IMR-90 (cell line): ENCODE measurements at regions of chr17 and their contacts with region 1.

Region 1: GRCh38 chr17:2172077-2172851 is 117.4 kb downstream of the HIC1 start:
- DNase-seq: peak; percentile 99
- ATAC-seq: peak; percentile 60
- H3K4me3 ChIP-seq: peak overlapping the region; percentile 15; the same call in 1 of the 2 replicates
- H3K27ac ChIP-seq: peak overlapping the region; percentile 99
- H3K4me1 ChIP-seq: peaks cover 50% of the 10 kb centered on the region
- H3K27me3 ChIP-seq: no peaks in the 10 kb centered on the region
- CTCF ChIP-seq: no peak
- POLR2A ChIP-seq: no peak; the same call in 1 of the 2 replicates
- RAD21 ChIP-seq: peak; percentile 40

Region 2: DNA sequence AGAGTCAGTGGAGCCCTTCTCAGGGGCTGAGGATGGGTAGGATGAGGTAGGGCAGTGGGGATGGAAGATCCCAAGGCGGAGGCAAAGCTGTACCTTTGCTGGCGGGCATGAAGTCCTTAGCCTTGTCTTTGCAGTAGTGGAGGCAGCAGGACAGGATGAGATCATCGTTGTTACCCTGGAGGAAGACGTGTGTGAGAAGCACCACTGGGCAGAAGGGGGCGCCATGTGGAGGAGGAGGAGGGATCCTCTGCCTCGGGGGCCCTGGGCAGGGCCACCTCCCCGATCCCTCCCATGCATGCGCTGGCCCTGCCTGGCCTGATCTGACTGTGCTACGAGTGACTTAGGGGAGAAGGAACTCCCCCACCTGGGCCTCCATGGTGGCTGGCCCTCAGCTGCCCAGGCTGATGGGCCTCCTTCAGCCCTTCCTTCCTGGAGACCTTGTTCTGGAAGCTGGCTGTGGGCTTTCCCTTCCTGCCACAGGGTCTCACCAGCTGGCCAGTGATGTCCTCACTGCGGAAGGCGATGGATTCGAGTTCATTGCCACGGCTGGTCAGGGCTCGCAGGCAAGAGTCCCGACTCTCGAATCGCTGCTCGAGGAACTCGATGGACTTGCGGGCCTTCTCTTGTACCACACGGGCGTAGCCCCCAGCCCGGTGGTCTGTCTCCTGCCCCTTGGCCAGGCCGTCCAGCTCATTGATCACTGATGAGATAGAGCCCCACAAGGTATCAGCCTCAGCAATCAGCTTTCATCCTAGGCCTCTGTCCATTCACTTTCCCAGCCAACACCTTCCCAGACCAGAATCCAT is 107.1 kb before region 1 on chr17:
- CTCF ChIA-PET with region 1: no interaction called
- POLR2A ChIA-PET with region 1: no interaction called
- dilution Hi-C with region 1: no loop called
- in situ Hi-C with region 1: loop called (anchors 10 kb)
- intact Hi-C with region 1: loop called (anchors 2 kb)
- DNase-seq: peak; percentile 68
- ATAC-seq: no peak
- H3K4me3 ChIP-seq: no peak overlapping the region
- H3K27ac ChIP-seq: peak overlapping the region; percentile 92
- H3K4me1 ChIP-seq: peaks cover 74% of the 10 kb centered on the region
- H3K27me3 ChIP-seq: no peaks in the 10 kb centered on the region
- CTCF ChIP-seq: peak; percentile 60
- POLR2A ChIP-seq: no peak
- RAD21 ChIP-seq: peak; percentile 53

Region 3: GRCh38 chr17:2348308-2348685 is 176.0 kb after region 1 on chr17:
- CTCF ChIA-PET with region 1: no interaction called
- POLR2A ChIA-PET with region 1: interaction called, 12 read pairs
- dilution Hi-C with region 1: no loop called
- in situ Hi-C with region 1: no loop called
- intact Hi-C with region 1: no loop called
- DNase-seq: no peak
- ATAC-seq: no peak
- H3K4me3 ChIP-seq: no peak overlapping the region
- H3K27ac ChIP-seq: peak overlapping the region; percentile 4; the same call in 1 of the 2 replicates
- H3K4me1 ChIP-seq: peaks cover 9% of the 10 kb centered on the region
- H3K27me3 ChIP-seq: no peaks in the 10 kb centered on the region
- CTCF ChIP-seq: no peak
- POLR2A ChIP-seq: no peak
- RAD21 ChIP-seq: no peak